ENCODE measurements at regions of chr5 and their contacts with region 1.

Region 1: DNA sequence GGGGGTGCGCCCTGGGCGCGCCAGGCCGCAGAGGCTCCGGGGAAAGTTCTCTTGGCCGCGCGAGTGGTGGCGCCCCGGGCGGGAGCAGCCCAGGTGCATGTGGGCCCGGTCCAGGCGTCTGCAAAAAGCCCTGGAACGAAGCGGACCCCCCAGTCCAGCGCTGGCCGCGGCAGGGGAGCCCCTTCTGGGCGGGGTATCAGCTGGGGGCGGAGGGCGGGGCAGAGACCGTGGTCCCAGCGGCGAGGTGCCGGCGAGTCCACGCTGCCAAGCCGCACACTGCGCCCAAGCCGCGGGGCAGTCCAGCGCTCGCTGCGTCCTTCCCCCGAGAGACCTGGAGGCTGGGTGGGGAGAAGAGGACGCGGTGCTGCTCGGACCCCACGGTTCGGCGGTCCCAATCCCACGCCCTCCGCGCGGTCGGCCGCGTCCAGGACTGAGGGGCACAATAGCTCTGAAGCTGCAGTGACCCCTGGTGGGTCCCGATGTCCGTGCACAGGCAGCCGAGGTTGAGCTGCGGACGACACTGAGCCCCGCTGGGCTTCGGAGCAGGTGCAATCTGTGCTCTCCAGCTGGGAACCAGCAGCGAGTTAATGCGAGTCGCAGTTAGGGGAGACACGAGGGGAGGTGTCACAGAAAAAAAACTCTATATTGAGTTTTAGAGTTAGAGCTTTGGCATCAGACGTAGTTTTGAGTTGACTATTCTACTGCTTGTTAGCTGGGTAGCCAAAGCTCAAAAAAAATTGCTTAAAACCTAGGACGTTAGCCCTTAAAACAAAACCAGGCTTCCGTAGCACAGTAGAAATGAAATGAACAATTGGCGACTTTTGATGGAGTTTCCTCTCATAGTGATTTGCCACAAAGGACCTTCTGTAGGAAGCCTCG is 1.1 kb upstream of the EPB41L4A start:
- DNase-seq: peak; percentile 70
- H3K4me3 Mint-ChIP-seq: peak overlapping the region; percentile 77
- H3K27ac Mint-ChIP-seq: no peak overlapping the region
- H3K4me1 Mint-ChIP-seq: no peaks in the 10 kb centered on the region
- H3K27me3 Mint-ChIP-seq: no peaks in the 10 kb centered on the region
- CTCF ChIP-seq: peak; percentile 91

Region 2: DNA sequence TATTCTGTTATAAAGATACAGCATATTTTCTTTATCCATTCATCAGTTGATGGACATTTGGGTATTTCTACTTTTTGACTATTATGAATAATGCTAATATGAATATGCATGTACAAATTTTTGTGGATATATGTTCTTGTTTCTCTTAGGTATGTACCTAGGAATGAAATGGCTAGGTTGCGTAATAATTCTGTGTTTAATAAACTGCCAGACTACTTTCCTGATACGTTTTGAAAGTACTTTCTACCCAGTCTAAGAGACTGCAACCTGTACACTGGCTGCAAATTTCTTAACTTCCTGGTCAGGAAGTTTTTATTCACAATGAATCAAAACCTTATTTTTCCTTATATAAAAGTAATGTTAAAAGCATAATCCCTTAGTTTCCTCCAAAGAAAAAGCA is 814.0 kb before region 1 on chr5:
- CTCF ChIA-PET with region 1: no interaction called
- POLR2A ChIA-PET with region 1: no interaction called
- intact Hi-C with region 1: no loop called
- DNase-seq: no peak
- H3K4me3 Mint-ChIP-seq: no peak overlapping the region
- H3K27ac Mint-ChIP-seq: no peak overlapping the region
- H3K4me1 Mint-ChIP-seq: no peaks in the 10 kb centered on the region
- H3K27me3 Mint-ChIP-seq: no peaks in the 10 kb centered on the region
- CTCF ChIP-seq: no peak

Region 3: GRCh38 chr5:112160652-112161391 is 259.4 kb before region 1 on chr5:
- CTCF ChIA-PET with region 1: interaction called, 77 read pairs
- POLR2A ChIA-PET with region 1: interaction called, 83 read pairs
- intact Hi-C with region 1: no loop called
- DNase-seq: peak; percentile 90
- H3K4me3 Mint-ChIP-seq: peak overlapping the region; percentile 95
- H3K27ac Mint-ChIP-seq: peak overlapping the region; percentile 92
- H3K4me1 Mint-ChIP-seq: peaks cover 24% of the 10 kb centered on the region
- H3K27me3 Mint-ChIP-seq: no peaks in the 10 kb centered on the region
- CTCF ChIP-seq: peak; percentile 97

Region 4: DNA sequence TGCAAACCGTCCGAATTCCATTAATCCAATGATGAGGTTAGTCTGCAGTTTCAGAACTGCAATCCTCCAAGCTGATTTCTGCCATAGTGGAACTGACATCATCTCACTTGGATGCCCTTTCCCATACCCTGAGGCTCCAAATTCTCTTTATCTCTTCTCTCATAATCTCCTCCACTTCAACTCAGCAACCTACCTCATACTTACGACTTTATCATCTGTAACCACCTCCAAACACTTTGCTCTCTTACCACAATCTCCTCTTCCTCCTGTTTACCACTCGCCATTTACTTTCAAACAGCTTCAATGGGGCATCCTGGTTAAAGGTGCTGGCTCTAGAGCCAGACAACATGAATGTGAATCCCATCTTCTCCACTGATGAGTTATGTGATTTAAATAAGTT is 224.3 kb before region 1 on chr5:
- CTCF ChIA-PET with region 1: interaction called, 12 read pairs
- POLR2A ChIA-PET with region 1: interaction called, 3 read pairs
- intact Hi-C with region 1: no loop called
- DNase-seq: no peak
- H3K4me3 Mint-ChIP-seq: no peak overlapping the region
- H3K27ac Mint-ChIP-seq: no peak overlapping the region
- H3K4me1 Mint-ChIP-seq: no peaks in the 10 kb centered on the region
- H3K27me3 Mint-ChIP-seq: no peaks in the 10 kb centered on the region
- CTCF ChIP-seq: no peak

Region 5: DNA sequence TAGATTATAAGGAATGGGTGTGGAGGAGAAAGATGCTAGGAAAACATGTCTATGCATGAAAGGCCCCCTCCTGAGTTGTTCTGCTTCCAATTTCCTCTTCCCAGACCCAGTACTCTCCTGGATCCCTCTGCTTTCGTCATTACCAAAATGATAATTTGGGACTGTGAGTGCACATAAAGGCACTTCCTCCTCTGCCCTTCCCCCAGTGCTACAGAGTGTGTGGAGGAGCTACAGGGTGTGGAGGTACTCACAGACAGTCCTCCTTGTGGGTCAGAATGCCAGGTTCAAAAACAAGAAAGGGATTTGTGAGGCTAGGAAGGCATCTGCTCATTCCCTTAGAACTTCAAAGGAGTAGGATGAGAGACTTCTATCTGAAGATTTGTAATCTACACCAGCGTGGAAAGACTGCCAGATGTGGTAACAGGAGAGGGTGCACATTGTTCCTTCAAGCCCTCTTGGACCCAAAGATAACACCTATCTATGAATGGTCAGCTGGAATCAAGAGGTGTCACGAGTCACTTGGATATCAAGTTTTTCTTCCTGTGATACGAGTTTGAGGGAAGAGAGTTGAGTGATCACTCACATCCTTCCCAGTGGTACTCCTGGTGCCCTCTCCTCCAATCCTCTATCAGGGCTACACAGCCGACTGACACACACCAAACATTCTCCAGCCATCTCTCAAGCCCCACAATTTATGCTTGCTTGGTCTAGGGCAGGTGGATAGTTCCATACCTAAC is 202.2 kb before region 1 on chr5:
- CTCF ChIA-PET with region 1: interaction called, 73 read pairs
- POLR2A ChIA-PET with region 1: interaction called, 43 read pairs
- intact Hi-C with region 1: no loop called
- DNase-seq: peak; percentile 34
- H3K4me3 Mint-ChIP-seq: no peak overlapping the region
- H3K27ac Mint-ChIP-seq: no peak overlapping the region
- H3K4me1 Mint-ChIP-seq: peaks cover 9% of the 10 kb centered on the region
- H3K27me3 Mint-ChIP-seq: no peaks in the 10 kb centered on the region
- CTCF ChIP-seq: no peak

Region 6: GRCh38 chr5:112338681-112339337 is 81.4 kb before region 1 on chr5:
- CTCF ChIA-PET with region 1: interaction called, 6 read pairs
- POLR2A ChIA-PET with region 1: interaction called, 27 read pairs
- intact Hi-C with region 1: no loop called
- DNase-seq: peak; percentile 89
- H3K4me3 Mint-ChIP-seq: peak overlapping the region; percentile 52
- H3K27ac Mint-ChIP-seq: peak overlapping the region; percentile 60
- H3K4me1 Mint-ChIP-seq: peaks cover 26% of the 10 kb centered on the region
- H3K27me3 Mint-ChIP-seq: no peaks in the 10 kb centered on the region
- CTCF ChIP-seq: no peak

Region 7: DNA sequence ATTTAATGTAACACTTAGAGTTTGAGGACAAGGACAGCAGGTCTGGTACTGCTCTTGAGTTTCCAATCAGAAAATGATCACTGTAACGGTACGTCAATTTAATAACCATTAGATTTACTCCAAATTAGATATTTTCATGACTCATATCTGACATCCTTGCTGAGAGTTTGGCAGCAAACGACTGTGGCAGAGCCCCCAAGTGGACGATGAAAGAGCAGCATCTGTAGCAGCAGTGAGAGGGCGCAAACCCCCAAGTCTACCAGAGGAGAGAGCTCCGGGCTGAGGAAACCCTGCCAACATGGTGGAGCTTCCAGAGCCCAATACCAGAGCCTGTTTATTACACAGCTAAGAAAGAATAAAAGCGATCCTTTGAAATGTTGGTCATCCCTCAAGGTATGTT is 72.1 kb after region 1 on chr5:
- CTCF ChIA-PET with region 1: interaction called, 14 read pairs
- POLR2A ChIA-PET with region 1: interaction called, 3 read pairs
- intact Hi-C with region 1: no loop called
- DNase-seq: peak; percentile 79
- H3K4me3 Mint-ChIP-seq: no peak overlapping the region
- H3K27ac Mint-ChIP-seq: no peak overlapping the region
- H3K4me1 Mint-ChIP-seq: no peaks in the 10 kb centered on the region
- H3K27me3 Mint-ChIP-seq: no peaks in the 10 kb centered on the region
- CTCF ChIP-seq: peak; percentile 50